ENCODE measurements at regions of chr4 and their contacts with region 1.

Region 1: DNA sequence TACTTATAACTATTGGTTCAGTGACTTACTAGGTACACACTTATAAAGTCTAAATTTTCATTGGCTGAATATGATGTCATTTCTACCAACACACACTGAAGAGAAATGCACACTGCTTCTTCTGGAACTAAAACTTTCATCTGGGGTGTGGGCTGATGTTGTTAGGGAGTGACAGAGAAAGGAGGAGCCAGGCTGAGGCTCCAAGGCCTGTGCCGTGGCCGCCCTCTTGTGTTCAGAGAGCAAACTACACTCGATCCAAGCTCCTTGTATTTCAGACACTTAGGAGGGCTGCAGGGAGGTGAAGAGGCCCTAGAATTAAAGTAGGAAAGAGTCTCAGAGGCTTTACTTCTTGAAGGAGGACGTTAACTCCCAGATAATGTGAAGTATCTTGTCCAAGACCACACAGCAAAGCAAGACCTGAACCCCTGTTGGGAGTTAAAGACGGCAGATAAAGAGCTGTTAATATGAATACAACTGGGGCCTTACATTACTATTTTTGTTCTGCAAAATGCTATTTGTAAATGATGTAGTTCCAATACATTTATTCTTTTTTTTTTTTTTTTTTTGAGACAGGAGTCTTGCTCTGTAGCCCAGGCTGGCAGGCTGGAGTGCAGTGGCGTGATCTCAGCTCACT is 137.5 kb downstream of the AFAP1 start:
- DNase-seq: peak; percentile 67
- ATAC-seq: peak; percentile 43
- H3K4me3 ChIP-seq: no peak overlapping the region
- H3K27ac ChIP-seq: no peak overlapping the region
- H3K4me1 ChIP-seq: peaks cover 36% of the 10 kb centered on the region
- H3K27me3 ChIP-seq: no peaks in the 10 kb centered on the region
- CTCF ChIP-seq: peak; percentile 90
- EP300 ChIP-seq: no peak
- POLR2A ChIP-seq: no peak
- RAD21 ChIP-seq: peak; percentile 69

Region 2: GRCh38 chr4:6538575-6538974 is 1263.6 kb before region 1 on chr4:
- CTCF ChIA-PET with region 1: no interaction called
- POLR2A ChIA-PET with region 1: no interaction called
- in situ Hi-C with region 1: no loop called
- intact Hi-C with region 1: no loop called
- DNase-seq: peak; percentile 4
- ATAC-seq: peak; percentile 68
- H3K4me3 ChIP-seq: peak overlapping the region in 2 of 3 experiments; percentile 6 to 52; a peak in 1 of 6 replicates
- H3K27ac ChIP-seq: no peak overlapping the region
- H3K4me1 ChIP-seq: peaks cover 28% of the 10 kb centered on the region
- H3K27me3 ChIP-seq: peaks cover 0 to 12% of the 10 kb centered on the region in 2 experiments; a peak in 2 of 5 replicates
- CTCF ChIP-seq: no peak
- EP300 ChIP-seq: no peak
- POLR2A ChIP-seq: no peak
- RAD21 ChIP-seq: no peak

Region 3: DNA sequence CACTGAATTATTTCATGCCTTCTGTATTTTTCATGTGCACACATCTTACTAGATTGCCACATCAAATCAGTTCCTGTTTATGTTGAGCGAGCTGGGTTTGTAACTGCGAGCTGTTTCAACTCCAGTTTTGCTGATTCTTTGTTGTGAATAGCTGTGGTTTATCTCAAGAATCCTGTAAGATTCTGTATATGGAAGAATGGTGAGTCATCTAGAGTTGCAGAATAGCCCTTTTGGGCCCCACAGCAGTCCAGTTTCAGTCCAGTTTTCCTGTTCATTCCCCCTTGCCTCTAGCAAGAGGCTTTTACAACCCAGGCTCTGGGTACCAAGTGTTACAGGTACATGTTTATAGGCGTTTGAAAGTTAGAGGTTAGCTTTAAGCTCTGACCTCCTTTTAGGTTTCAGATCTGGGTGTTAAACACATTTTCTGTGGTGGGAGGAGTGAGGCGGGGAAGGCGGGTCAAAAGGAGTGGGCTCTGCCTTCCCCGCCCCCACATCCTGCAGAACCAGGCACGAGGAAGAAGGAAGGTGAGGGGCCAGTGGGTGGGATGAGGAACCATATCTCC is 859.9 kb before region 1 on chr4:
- CTCF ChIA-PET with region 1: no interaction called
- POLR2A ChIA-PET with region 1: no interaction called
- in situ Hi-C with region 1: no loop called
- intact Hi-C with region 1: no loop called
- DNase-seq: no peak
- ATAC-seq: no peak
- H3K4me3 ChIP-seq: no peak overlapping the region
- H3K27ac ChIP-seq: peak overlapping the region; percentile 2
- H3K4me1 ChIP-seq: peaks cover 41% of the 10 kb centered on the region
- H3K27me3 ChIP-seq: no peaks in the 10 kb centered on the region
- CTCF ChIP-seq: no peak
- EP300 ChIP-seq: no peak
- POLR2A ChIP-seq: no peak
- RAD21 ChIP-seq: no peak

Region 4: DNA sequence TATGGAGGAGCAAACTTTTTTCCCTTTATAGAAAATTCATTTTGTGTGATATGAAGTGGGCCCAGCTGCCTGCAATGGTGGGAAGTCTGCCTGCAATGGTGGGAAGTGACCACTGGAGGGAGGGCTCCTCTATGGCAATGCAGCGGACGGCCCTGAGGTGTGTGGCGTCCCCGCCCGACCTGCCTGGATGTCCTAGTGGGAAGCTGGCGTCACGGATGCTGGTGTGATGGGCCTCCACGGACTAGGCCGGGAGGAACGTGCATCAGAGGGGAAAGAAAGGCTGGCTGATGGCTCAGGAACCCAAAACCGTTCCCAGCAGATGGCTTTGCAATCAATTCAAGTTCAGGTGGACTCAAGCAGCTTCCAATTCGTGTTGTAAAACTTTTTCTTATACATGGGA is 40.5 kb before region 1 on chr4:
- CTCF ChIA-PET with region 1: interaction called, 13 read pairs
- POLR2A ChIA-PET with region 1: no interaction called
- in situ Hi-C with region 1: loop called (anchors 5 kb)
- intact Hi-C with region 1: loop called (anchors 1 kb)
- DNase-seq: peak; percentile 49
- ATAC-seq: peak; percentile 93
- H3K4me3 ChIP-seq: no peak overlapping the region
- H3K27ac ChIP-seq: no peak overlapping the region
- H3K4me1 ChIP-seq: peaks cover 61% of the 10 kb centered on the region
- H3K27me3 ChIP-seq: no peaks in the 10 kb centered on the region
- CTCF ChIP-seq: peak; percentile 81
- EP300 ChIP-seq: no peak
- POLR2A ChIP-seq: no peak
- RAD21 ChIP-seq: peak; percentile 61

Region 5: DNA sequence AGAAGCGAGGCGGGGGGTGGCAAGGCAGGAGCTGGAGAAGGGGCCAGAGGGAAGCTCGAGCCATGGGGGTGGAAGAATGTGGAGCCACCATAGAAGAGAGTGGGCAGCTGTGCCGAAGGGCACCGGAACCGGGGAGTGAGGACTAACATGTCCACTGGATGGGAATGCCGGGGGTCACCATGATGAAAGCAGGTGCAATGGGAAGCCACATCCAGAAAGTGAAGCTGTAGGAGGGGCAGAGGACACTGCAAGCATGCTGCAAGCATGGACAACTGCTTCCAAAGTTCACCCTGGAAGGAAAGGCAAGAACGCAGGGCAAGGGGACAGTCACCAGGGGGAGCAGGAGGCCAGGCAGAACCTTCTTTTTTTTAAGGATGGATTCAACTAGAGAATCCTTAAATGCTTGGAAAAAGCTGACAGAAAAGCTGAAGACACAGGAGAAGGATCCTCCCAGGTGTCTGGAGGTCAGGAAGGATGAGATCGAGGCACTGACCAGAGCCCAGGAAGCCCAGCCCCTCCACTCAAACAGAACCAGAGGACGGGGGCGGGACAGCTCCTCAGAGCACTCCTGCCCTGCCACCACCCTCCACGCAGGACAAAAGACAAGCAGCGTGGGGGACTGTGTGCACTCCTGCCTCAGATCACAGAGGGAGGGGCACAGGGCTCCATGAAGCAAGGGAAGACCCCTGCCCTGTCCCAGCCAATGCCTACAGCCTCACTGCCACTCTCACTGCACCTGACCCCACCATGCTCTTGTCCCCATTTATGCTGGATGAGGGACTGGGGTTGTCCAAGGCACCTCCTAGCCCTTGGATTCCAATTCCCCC is 31.8 kb before region 1 on chr4:
- CTCF ChIA-PET with region 1: interaction called, 11 read pairs
- POLR2A ChIA-PET with region 1: interaction called, 3 read pairs
- in situ Hi-C with region 1: loop called (anchors 5 kb)
- intact Hi-C with region 1: loop called (anchors 1 kb)
- DNase-seq: peak; percentile 53
- ATAC-seq: peak; percentile 74
- H3K4me3 ChIP-seq: no peak overlapping the region
- H3K27ac ChIP-seq: no peak overlapping the region
- H3K4me1 ChIP-seq: peaks cover 88% of the 10 kb centered on the region
- H3K27me3 ChIP-seq: no peaks in the 10 kb centered on the region
- CTCF ChIP-seq: peak; percentile 67
- EP300 ChIP-seq: 0 out of 4 replicates have a peak, but pooled peaks of 1 of the 2 experiments have one; percentile 19
- POLR2A ChIP-seq: no peak
- RAD21 ChIP-seq: no peak; the same call in 1 of the 2 replicates

Region 6: DNA sequence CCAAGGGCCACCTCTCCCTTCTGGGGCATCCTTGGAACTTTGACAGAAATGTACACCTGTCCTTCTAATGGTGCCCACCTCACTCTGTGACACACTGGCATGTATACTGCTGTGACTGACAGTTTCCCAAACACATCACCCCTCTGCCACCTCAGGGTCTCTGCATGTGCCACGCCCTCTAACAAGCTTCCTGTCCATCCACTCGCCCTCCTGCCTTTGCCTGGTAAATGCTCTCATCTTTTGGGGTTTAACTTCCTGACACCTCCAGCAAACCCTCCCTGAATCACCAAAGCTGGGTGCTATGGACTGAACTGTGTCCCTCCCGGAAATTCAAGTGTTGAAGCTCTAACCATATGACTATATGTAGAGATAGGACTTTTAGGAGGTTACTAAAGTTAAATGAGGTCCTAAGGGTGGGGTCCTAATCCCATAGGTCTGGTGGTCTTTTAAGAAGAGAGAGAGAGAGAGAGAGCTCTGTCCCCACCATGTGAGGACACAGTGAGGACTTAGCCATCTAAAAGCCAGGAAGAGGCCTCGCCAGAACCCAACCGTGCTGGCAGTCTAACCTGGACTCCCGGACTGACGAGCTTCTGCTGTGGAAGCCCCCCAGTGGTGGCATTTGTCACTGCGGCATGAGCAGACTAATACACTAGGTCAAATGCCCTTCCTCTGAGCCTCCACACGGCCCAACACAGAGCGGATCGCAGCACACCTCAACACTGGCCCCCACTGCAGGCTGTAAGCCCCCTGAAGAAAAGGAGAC is 41.8 kb after region 1 on chr4:
- CTCF ChIA-PET with region 1: interaction called, 19 read pairs
- POLR2A ChIA-PET with region 1: interaction called, 5 read pairs
- in situ Hi-C with region 1: loop called (anchors 5 kb)
- intact Hi-C with region 1: loop called (anchors 1 kb)
- DNase-seq: peak; percentile 70
- ATAC-seq: peak; percentile 99
- H3K4me3 ChIP-seq: no peak overlapping the region
- H3K27ac ChIP-seq: no peak overlapping the region
- H3K4me1 ChIP-seq: peaks cover 20% of the 10 kb centered on the region
- H3K27me3 ChIP-seq: no peaks in the 10 kb centered on the region
- CTCF ChIP-seq: peak; percentile 84
- EP300 ChIP-seq: no peak
- POLR2A ChIP-seq: no peak
- RAD21 ChIP-seq: peak; percentile 73

Region 7: GRCh38 chr4:7929118-7929951 is 127.1 kb after region 1 on chr4:
- CTCF ChIA-PET with region 1: interaction called, 6 read pairs
- POLR2A ChIA-PET with region 1: no interaction called
- in situ Hi-C with region 1: no loop called
- intact Hi-C with region 1: loop called (anchors 1 kb)
- DNase-seq: peak; percentile 56
- ATAC-seq: peak; percentile 92
- H3K4me3 ChIP-seq: no peak overlapping the region
- H3K27ac ChIP-seq: no peak overlapping the region
- H3K4me1 ChIP-seq: peaks cover 28% of the 10 kb centered on the region
- H3K27me3 ChIP-seq: no peaks in the 10 kb centered on the region
- CTCF ChIP-seq: peak; percentile 75
- EP300 ChIP-seq: no peak
- POLR2A ChIP-seq: no peak
- RAD21 ChIP-seq: peak; percentile 52; the same call in 1 of the 2 replicates

Measured in HepG2 (cell line).